ENCODE measurements at regions of chr14 and their contacts with region 1.

Region 1: GRCh38 chr14:89600950-89601826 is 184.2 kb upstream of the FOXN3 start:
- DNase-seq: no peak
- ATAC-seq: peak; percentile 62 to 88 (median 81)
- H3K4me3 ChIP-seq: no peak overlapping the region
- H3K27ac ChIP-seq: peak overlapping the region in 8 of 10 donors; percentile 16 to 67 (median 48)
- H3K4me1 ChIP-seq: peaks cover 0 to 52% (median 33%) of the 10 kb centered on the region in 9 donors
- H3K27me3 ChIP-seq: no peaks in the 10 kb centered on the region
- CTCF ChIP-seq: no peak

Region 2: GRCh38 chr14:89430391-89431236 is 170.6 kb before region 1 on chr14:
- intact Hi-C with region 1: no loop called
- DNase-seq: no peak
- ATAC-seq: peak in 6 of 8 donors; percentile 20 to 49 (median 30)
- H3K4me3 ChIP-seq: peak overlapping the region in 9 of 10 donors; percentile 15 to 47 (median 44)
- H3K27ac ChIP-seq: peak overlapping the region; percentile 1 to 89 (median 66)
- H3K4me1 ChIP-seq: peaks cover 12 to 53% (median 41%) of the 10 kb centered on the region in 9 donors
- H3K27me3 ChIP-seq: no peaks in the 10 kb centered on the region
- CTCF ChIP-seq: no peak

Region 3: DNA sequence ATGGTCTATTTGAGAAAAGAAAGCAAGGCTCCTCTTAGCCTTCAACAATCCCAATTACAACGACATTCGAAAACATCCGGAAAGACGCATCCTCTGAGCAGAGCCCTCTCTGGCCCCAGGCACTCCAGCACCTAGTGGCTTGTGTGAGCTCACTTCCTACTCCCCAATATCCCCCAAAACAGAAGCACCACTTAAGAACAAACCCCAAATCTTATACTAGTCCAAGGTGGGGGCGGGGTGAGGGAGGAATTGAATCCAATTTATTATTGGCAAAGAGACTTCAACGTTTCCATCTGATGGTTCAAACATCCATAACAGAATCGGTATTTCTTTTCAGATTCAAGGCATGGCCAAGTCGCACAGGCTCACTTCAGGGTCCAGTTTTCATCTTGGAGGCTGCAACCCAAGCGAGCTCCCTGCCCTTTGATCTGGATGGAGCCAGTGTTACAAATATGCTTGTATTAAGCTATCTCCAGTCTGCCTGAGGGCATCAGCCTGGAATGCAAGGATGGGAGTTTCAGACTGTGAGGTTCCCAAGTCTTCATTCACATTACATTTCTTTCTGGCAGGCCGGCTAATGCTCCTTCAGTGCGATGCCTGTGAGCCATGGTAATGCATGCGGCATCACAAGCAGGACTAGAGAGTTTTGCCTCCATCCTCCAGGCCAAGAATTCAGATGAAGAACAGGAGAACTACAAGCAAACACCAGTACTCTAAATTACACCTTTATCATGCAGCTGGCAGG is 51.6 kb before region 1 on chr14:
- intact Hi-C with region 1: loop called in 1 of 10 experiments (anchors 10 kb)
- DNase-seq: no peak
- ATAC-seq: no peak
- H3K4me3 ChIP-seq: no peak overlapping the region
- H3K27ac ChIP-seq: peak overlapping the region in 1 of 10 donors; percentile 41
- H3K4me1 ChIP-seq: peaks cover 0 to 35% (median 14%) of the 10 kb centered on the region in 9 donors
- H3K27me3 ChIP-seq: no peaks in the 10 kb centered on the region
- CTCF ChIP-seq: no peak

Region 4: DNA sequence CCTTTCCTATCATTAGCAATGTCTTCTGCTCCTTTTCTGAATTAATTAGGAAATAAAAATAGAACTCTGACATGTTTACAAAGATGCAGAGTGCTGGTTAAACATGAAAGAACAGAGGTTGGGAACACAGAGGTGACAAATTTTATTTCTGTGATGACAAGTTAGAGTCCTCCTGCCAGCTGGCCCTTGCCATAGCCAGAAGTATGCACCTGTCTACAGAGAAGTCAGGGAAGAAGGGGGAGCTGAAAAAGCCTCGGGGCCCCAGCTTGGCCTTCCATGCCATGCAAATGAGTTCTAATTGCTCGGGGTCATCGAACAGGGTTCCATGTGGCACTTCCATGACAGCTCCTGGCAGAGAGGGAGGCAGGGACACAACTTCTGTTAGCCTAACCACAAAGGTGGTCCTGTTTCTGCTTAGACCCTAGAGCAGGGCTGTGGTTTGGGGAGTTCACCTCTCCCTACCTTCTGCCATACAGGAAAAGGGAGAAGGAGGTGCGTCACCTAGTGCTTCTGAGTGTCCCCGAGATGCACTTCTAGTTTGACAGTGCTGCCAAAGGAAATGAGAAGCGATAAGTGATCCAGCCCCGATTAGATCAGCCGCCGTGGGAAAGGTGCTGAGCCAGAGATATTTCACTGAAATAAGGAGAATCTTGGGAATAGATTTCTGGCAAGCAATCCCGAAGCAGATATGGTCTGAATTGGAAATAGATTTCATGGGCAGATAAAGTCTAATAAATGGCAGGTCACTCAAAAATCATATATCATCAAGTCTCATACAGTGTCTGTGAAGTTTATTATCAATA is 28.4 kb before region 1 on chr14:
- intact Hi-C with region 1: loop called in 1 of 10 experiments (anchors 2 kb)
- DNase-seq: no peak
- ATAC-seq: peak in 6 of 8 donors; percentile 20 to 83 (median 50)
- H3K4me3 ChIP-seq: no peak overlapping the region
- H3K27ac ChIP-seq: peak overlapping the region in 8 of 10 donors; percentile 23 to 64 (median 48)
- H3K4me1 ChIP-seq: peaks cover 15 to 76% (median 42%) of the 10 kb centered on the region in 9 donors
- H3K27me3 ChIP-seq: no peaks in the 10 kb centered on the region
- CTCF ChIP-seq: no peak